GM10248 (cell line): ENCODE measurements at regions of chr16 and their contacts with region 1.

Region 1: DNA sequence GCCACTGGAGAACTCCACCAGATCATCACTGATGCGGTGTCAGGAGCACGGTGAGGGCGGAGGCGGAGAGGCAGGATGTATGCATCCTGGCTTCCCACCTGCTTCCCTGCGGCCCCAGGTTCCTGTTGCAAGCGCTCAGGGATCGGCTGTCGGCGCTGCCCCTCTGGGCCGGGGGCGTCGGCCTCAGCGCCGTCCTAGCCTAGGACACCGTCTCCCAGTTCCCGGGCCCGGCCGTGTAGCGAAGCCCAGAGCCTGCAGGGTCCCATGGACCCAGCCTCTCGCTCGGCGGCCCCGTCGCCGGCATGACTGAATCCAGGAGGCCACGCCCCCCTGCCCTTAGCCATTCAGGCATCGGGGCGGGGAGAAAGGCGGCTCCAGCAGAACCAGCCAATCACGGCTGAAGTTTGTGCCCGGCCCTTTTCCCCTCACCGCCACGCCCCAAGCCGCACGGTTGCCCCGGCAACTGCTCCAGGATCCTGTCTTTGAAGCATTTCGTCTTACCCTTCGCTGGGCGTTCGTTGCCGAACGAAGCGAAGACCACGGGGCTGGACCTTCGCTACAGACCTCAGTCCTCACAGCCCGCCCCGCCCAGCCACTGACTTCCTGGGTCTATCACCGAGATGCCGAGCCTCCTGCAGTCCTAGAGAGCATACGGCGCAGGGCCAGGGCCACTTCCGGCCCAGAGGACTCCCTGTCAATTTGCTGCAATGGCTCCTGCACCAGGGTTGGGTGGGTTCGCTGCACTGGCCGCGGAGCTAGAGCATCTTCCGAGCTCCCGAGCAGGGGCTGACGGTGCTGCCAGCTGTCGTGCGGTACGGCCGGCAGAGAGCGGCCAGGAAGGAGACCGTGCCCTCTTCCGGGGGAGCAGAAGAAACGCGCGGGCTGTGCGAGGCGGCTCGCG is 10.6 kb upstream of the ZNF213 start:
- DNase-seq: peak; percentile 97
- CTCF ChIP-seq: peak; percentile 20

Region 2: DNA sequence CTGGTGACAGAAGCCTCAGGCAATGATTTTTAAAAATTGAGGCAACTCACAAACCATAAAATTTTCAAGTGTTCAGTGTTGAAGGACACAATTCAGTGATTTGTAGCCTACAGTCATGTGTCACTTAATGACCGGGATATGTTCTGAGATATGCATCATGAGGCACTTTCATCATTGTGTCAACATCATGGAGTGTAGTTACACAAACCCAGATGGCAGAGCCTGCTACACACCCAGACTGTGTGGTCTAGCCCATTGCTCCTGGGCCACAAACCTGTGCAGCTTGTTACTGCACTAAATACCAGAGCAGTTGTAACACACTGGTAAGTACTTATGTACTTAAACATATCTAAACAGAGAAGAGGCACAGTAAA is 324.4 kb before region 1 on chr16:
- CTCF ChIA-PET with region 1: no interaction called
- POLR2A ChIA-PET with region 1: no interaction called
- DNase-seq: no peak
- CTCF ChIP-seq: no peak

Region 3: DNA sequence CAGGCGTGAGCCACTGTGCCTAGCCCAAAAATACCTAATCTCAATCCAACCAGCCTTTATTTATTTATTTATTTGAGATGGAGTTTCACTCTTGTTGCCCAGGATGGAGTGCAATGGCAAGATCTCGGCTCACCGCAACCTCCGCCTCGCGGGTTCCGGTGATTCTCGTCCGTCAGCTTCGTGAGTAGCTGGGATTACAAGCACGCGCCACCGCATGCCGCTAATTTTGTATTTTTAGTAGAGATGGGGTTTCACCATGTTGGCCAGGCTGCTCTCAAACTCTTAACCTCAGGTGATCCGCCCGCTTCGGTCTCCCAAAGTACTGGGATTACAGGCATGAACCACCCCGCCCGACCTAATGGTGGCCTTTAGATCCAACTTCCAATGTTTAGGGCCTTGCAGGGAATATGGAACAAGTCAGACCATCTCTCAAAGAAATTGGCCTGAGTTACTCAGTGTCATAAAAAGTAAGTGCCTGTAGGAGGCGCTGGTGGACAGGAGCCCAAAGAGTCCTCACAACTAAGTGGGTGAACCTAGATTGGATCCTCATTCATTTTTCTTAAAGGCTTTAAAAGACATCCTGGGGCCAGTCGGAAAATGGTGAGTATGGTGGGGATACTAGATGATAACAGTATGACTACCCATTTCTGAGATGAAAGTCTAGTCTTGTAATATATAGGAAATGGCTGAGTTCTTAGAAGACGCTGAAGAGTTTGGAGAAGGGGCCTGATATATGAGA is 29.8 kb before region 1 on chr16:
- CTCF ChIA-PET with region 1: interaction called, 246 read pairs
- POLR2A ChIA-PET with region 1: no interaction called
- DNase-seq: peak; percentile 74
- CTCF ChIP-seq: peak; percentile 56

Region 4: GRCh38 chr16:3106205-3106928 is 17.9 kb before region 1 on chr16:
- CTCF ChIA-PET with region 1: interaction called, 246 read pairs
- POLR2A ChIA-PET with region 1: no interaction called
- DNase-seq: peak; percentile 99
- CTCF ChIP-seq: no peak

Region 5: DNA sequence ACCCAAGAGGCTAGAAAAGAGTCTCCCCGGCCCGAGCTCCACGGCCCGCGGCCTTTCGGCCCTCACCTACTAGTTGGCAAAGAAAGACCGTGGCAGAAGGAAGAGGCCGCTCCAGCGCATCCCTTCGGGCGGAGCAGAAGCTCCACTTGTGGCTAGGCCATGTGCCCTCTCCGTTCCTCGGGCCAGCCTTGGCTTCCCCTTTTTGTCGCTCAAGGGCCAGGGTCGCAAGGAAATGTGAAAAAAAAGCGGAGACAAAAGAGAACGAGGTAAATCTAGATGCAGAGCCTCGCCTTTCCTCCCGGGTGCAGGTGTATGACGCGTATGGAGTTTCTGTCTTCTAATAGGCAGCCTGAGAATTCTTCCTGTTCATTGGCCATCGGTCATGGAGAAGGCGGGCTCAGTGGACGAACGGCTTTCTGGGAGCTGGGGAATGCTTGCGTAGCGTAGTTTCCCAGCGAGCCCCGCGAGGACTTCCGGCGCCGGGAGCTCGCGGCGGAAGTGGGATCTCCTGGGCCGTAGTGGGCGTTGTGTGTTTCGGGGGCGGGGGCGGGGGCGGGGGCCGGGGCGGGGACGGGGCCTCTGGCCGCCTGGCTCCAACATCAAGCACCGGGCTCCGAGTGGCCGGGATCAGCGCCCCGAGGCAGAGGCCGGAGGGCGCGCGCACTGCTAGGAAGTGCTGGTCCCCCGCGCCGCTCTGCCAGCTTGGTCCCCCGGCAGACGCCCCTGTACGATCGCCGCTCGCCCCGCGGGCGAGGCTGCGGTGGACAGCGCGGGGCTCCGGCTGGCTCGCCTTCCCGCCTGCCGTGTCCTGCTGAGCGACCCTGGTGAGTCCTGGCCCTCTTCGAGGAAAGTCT is 10.6 kb after region 1 on chr16 and contains the start of gene ZNF213:
- CTCF ChIA-PET with region 1: interaction called, 70 read pairs
- POLR2A ChIA-PET with region 1: interaction called, 3 read pairs
- DNase-seq: peak; percentile 94
- CTCF ChIP-seq: no peak

Region 6: DNA sequence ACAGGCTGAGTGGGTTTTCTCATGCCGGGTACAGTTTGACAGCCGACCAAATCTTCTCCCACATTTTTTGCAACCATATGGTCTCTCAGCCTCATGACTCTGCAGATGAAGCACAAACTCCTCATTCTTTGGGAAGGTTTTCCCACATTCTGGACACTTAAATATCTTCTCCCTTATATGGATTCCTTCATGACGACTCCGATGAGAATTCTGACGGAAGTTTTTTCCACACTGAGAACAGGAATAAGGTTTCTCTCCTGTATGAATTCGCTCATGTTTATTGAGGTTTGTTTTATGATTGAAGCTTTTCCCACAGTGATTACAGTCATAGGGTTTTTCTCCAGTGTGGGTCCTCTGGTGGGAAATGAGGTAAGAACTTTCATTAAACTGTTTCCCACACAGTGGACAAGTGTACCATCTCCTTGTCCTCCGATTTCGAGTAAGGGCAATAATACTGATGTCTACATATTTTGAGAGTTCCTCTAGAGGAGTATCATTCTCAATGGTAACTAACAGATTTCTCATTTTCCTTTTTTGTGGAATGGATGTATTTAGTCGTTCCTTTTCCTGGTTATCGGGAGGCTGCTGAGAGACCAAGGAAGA is 99.8 kb after region 1 on chr16:
- CTCF ChIA-PET with region 1: no interaction called
- POLR2A ChIA-PET with region 1: no interaction called
- DNase-seq: no peak
- CTCF ChIP-seq: no peak